Left cardiac atrium (tissue), 4 donors: ENCODE measurements at regions of chr11 and their contacts with region 1.

Region 1: GRCh38 chr11:123407130-123407995 is 22.7 kb upstream of the GRAMD1B start:
- DNase-seq: peak; percentile 68
- ATAC-seq: peak; percentile 55 to 60

Region 2: DNA sequence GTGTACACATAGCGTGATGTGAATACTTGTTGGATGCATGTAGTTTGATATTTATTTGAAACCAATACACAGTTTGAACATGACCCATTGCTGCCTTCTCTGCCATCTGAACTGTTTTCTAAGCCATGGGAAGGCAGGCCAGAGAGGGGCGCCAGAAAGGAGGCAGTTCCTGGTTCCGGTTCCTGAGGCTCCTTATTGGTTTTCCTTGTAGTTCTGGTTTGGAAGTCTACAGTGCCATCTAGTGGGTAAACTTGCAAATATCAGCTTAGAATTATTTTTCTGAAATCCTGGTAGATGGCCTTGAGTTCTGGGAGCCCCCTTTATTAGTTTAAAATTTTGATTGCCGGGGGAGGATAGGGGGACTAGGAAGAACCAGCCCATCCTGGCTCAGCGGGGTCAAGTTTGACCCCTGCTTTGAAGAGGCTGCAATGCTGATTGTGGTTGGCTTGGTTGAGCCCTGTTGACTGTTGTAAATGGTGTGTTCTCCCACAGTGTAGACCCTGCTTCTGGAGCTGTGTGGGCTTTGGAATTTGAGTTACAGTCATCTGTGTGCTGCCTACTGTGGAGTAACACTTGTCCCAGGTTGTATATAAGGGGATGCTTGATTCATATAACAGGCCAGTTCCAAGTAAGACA is 71.1 kb after region 1 on chr11:
- intact Hi-C with region 1: loop called (anchors 1 to 5 kb)
- DNase-seq: peak; percentile 61
- ATAC-seq: peak; percentile 71 to 83